ENCODE measurements at regions of chr3 and their contacts with region 1.

Region 1: GRCh38 chr3:14402304-14402811 is at the start of gene SLC6A6:
- DNase-seq: peak; percentile 96 to 97
- H3K4me3 ChIP-seq: peak within 1 kb of the TSS; percentile 85 to 88
- H3K27ac ChIP-seq: peak within 1 kb of the TSS; percentile 69 to 79
- H3K4me1 ChIP-seq: peaks cover 0 to 43% (median 38%) of the 10 kb centered on the region in 4 donors
- H3K27me3 ChIP-seq: no peaks in the 10 kb centered on the region
- CTCF ChIP-seq: peak; percentile 34 to 36

Region 2: DNA sequence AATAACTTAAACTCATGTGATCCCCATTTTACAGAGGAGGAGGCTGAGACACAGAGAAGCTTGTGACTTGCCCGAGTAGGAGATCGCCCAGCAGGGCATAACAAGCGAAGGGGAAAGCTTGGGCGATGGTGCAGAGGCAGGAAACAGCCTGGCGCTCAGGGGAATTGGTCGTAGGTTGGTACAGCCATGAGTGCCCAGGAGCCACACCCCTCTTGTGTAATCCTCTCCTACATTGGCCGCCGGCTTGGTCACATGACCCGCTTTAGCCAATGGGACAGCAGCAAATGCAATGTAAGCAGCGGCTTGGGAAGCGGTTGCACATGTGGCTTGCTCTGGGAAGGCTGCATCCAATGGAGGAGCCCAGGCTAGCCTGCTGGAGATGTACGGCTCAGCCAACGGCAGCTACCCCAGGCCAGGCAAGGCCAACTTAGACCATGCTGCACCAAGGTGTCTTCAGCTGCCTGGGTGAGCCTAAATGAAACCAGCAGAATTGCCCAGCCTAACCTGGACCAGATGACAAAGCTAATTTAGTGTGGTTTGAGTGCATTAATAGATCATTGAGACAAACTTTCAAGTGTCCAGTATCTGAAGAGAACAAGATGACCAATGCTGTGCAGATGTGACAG is 50.2 kb before region 1 on chr3:
- intact Hi-C with region 1: no loop called
- DNase-seq: no peak
- H3K4me3 ChIP-seq: no peak overlapping the region
- H3K27ac ChIP-seq: no peak overlapping the region
- H3K4me1 ChIP-seq: no peaks in the 10 kb centered on the region
- H3K27me3 ChIP-seq: peaks cover 0 to 4% of the 10 kb centered on the region in 2 donors
- CTCF ChIP-seq: no peak

Region 3: DNA sequence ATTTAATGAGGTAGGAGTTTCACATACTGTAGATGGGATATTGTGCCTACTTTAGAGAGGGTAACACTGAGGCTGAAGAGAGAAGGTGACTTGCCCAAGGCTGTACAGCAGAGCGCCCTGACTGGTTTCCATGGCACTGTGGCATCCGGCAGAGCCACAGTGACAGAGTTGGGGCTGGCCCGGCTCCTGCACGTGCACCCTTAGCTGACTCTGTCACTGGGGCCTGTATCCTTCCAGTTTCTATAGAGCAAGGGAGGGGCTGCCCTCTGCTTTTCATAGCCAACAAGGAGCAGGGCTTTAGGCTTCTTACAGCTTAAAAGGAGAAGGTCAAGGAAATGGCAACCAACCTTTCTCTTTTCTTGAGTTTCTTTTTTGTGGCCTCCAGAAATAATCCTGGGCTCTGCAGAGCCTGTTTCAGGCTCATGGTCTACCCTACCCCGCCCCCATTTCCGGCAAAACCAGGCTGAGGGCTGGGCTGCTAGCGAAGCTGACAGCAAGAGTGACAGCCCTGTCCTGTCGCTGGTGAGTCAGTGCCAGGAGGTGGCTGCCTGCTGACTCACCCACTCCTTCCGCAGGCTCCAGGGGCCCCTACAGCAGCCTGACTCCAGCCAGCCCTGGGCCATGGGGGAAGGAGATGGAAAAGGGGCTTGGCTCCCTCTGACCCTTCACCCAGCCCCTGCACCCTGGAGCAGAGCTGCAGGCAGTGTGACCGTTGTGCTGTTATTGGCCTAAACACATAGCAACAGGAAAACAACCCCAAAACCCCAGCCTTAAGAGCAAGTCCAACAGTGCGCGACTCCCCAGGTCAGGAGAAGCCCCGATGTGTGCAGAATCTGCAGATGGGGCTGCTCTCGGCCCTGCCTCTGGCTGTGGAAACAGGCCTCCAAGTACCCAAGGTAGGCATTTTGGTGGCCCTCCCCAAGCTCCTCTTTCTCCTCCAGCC is 29.8 kb after region 1 on chr3:
- intact Hi-C with region 1: loop called (anchors 2 kb)
- DNase-seq: peak; percentile 84 to 95
- H3K4me3 ChIP-seq: no peak overlapping the region
- H3K27ac ChIP-seq: peak overlapping the region; percentile 60 to 77
- H3K4me1 ChIP-seq: peaks cover 0 to 41% (median 38%) of the 10 kb centered on the region in 4 donors
- H3K27me3 ChIP-seq: no peaks in the 10 kb centered on the region
- CTCF ChIP-seq: no peak

Region 4: DNA sequence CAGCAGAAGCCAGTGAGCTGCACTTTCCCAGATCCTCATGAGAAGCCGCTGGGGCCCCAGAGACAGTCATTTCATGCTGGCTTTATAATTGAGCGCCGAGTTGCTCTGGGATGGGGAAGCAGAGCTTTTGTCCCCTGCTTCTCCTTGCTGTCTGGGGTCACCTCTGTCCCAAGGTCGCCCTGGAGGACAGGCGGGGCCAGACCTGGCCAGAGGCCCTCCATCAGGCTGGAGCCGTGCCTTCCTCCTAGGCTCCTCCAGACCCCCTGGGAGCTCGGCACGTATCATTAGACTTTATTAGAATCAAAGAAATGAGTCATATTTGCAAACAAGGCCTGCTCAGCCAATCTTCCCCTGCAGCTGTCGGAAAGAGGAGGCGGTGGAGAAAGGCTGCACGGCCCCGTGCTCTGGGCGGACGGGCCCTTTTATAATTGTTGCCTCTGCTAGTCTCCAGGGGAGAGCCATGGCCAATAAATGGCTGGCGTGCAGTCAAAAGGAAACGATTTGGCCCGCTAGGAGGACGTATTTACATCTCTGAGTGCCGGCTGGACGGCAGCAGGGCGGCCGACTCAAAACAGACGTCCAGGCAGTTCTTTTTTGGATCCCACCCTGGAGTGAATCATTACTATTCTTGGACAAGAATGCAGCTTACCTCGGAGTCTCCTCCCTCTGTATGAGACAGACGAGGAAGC is 50.5 kb after region 1 on chr3:
- intact Hi-C with region 1: loop called (anchors 2 kb)
- DNase-seq: peak; percentile 95 to 97
- H3K4me3 ChIP-seq: no peak overlapping the region
- H3K27ac ChIP-seq: peak overlapping the region; percentile 79 to 82
- H3K4me1 ChIP-seq: peaks cover 10 to 42% (median 29%) of the 10 kb centered on the region in 4 donors
- H3K27me3 ChIP-seq: no peaks in the 10 kb centered on the region
- CTCF ChIP-seq: peak; percentile 31 to 49

Region 5: DNA sequence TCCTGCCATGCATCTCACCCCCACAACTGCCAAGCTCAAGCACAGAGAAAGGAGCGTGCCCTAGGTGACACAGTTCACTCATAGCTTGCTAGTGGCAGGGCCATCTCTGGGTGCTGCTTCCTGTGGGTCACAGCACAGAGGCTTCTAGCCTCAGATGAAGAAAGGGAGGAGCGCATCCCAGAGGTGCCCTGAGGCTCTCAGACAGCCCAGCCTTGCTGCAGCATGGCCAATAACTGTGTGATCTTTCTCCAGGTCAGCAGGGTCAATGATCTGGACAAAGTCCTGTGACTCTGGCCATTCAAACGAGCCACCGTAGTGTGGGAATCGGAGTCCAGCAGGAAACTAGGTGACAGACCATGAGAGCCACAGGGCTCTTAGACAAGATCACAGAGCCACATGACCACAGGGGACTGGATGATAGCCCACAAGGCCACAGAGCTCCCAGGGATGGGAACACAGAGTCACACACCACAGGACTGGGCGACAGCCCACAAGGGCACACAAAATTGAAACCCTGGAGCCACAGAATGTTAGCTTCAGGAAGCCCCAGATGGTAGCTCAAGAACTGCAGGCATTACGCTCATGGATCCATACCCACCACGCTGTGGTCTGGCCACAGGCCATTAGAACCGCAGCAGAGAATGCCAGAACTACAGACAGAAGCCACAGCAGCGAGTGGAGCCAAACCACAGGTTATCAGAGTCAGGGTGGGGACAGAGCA is 163.7 kb after region 1 on chr3:
- intact Hi-C with region 1: no loop called
- DNase-seq: no peak
- H3K4me3 ChIP-seq: no peak overlapping the region
- H3K27ac ChIP-seq: no peak overlapping the region
- H3K4me1 ChIP-seq: no peaks in the 10 kb centered on the region
- H3K27me3 ChIP-seq: peaks cover 0 to 51% of the 10 kb centered on the region in 2 donors
- CTCF ChIP-seq: no peak

Measured in tibial artery (tissue), 4 donors.